BJ (cell line): ENCODE measurements at regions of chr21 and their contacts with region 1.

Region 1: GRCh38 chr21:35603494-35603893 is 456.8 kb downstream of the SETD4 start:
- DNase-seq: no peak
- H3K4me3 ChIP-seq: no peak overlapping the region
- H3K27me3 ChIP-seq: no peaks in the 10 kb centered on the region
- CTCF ChIP-seq: no peak

Region 2: DNA sequence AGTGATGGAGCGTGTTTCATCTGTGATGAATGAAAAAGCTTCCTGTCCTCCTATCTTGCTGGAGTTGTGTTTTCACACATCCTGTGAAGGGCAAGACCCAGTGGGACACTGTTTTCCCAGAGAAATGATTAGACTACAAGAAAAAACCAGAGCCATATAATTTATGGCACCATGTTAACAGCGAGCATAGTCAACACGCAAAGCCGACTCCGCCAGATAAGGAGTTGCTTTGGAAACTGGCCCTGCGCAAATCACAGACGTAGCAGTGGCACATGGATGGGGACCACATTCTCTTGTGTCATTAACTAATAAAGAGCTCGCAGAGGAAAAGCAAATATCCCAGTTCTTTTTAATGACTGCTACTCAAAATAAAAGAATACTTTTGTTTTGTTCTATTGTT is 83.2 kb before region 1 on chr21:
- CTCF ChIA-PET with region 1: no interaction called
- POLR2A ChIA-PET with region 1: no interaction called
- DNase-seq: no peak
- H3K4me3 ChIP-seq: no peak overlapping the region
- H3K27me3 ChIP-seq: no peaks in the 10 kb centered on the region
- CTCF ChIP-seq: no peak

Region 3: GRCh38 chr21:35616090-35616489 is 12.6 kb after region 1 on chr21:
- CTCF ChIA-PET with region 1: interaction called, 10 read pairs
- POLR2A ChIA-PET with region 1: no interaction called
- DNase-seq: peak; percentile 47
- H3K4me3 ChIP-seq: no peak overlapping the region
- H3K27me3 ChIP-seq: no peaks in the 10 kb centered on the region
- CTCF ChIP-seq: peak; percentile 51